A673 (cell line): ENCODE measurements at regions of chr19 and their contacts with region 1.

Region 1: GRCh38 chr19:57389730-57390598 is at the start of gene ZNF548:
- DNase-seq: peak; percentile 100
- H3K4me3 ChIP-seq: peak within 1 kb of the TSS; percentile 74
- H3K27ac ChIP-seq: peak within 1 kb of the TSS; percentile 91
- H3K4me1 ChIP-seq: no peaks in the 10 kb centered on the region
- H3K27me3 ChIP-seq: no peaks in the 10 kb centered on the region
- CTCF ChIP-seq: peak; percentile 48
- total RNA-seq, gene ZNF548: 16.9 TPM in 2 replicates

Region 2: GRCh38 chr19:57171551-57172081 is 218.3 kb before region 1 on chr19:
- CTCF ChIA-PET with region 1: no interaction called
- POLR2A ChIA-PET with region 1: interaction called, 12 read pairs
- intact Hi-C with region 1: no loop called
- DNase-seq: peak; percentile 41
- H3K4me3 ChIP-seq: peak overlapping the region; percentile 36
- H3K27ac ChIP-seq: no peak overlapping the region
- H3K4me1 ChIP-seq: no peaks in the 10 kb centered on the region
- H3K27me3 ChIP-seq: peaks cover 4% of the 10 kb centered on the region
- CTCF ChIP-seq: no peak

Region 3: DNA sequence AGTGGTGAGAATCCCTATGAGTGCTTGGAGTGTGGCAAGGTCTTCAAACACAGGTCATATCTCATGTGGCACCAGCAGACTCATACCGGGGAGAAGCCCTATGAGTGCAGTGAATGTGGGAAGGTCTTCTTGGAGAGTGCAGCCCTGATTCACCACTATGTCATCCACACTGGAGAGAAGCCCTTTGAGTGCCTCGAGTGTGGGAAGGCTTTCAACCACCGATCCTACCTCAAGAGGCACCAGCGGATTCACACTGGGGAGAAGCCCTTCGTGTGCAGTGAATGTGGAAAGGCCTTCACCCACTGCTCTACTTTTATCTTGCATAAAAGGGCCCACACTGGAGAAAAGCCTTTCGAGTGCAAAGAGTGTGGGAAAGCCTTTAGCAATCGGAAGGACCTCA is 177.9 kb before region 1 on chr19:
- CTCF ChIA-PET with region 1: no interaction called
- POLR2A ChIA-PET with region 1: no interaction called
- intact Hi-C with region 1: no loop called
- DNase-seq: no peak
- H3K4me3 ChIP-seq: no peak overlapping the region
- H3K27ac ChIP-seq: no peak overlapping the region
- H3K4me1 ChIP-seq: no peaks in the 10 kb centered on the region
- H3K27me3 ChIP-seq: no peaks in the 10 kb centered on the region
- CTCF ChIP-seq: no peak

Region 4: GRCh38 chr19:57245959-57246358 is 144.0 kb before region 1 on chr19:
- CTCF ChIA-PET with region 1: no interaction called
- POLR2A ChIA-PET with region 1: interaction called, 10 read pairs
- intact Hi-C with region 1: no loop called
- DNase-seq: no peak
- H3K4me3 ChIP-seq: no peak overlapping the region
- H3K27ac ChIP-seq: no peak overlapping the region
- H3K4me1 ChIP-seq: peaks cover 9% of the 10 kb centered on the region
- H3K27me3 ChIP-seq: no peaks in the 10 kb centered on the region
- CTCF ChIP-seq: no peak

Region 5: GRCh38 chr19:57362997-57363705 is 26.8 kb before region 1 on chr19 and contains the starts of genes TRAPPC2B and ZNF547:
- CTCF ChIA-PET with region 1: interaction called, 4 read pairs
- POLR2A ChIA-PET with region 1: no interaction called
- intact Hi-C with region 1: loop called (anchors 2 kb)
- DNase-seq: peak; percentile 100
- H3K4me3 ChIP-seq: peak within 1 kb of the TSS; percentile 73
- H3K27ac ChIP-seq: peak within 1 kb of the TSS; percentile 83
- H3K4me1 ChIP-seq: no peaks in the 10 kb centered on the region
- H3K27me3 ChIP-seq: no peaks in the 10 kb centered on the region
- CTCF ChIP-seq: no peak
- total RNA-seq, gene TRAPPC2B: 16.8 and 18.7 TPM in 2 replicates
- total RNA-seq, gene ZNF547: 5.0 and 6.1 TPM in 2 replicates